ENCODE measurements at regions of chr16 and their contacts with region 1.

Region 1: GRCh38 chr16:12228602-12229499 is 252.3 kb downstream of the SNX29 start:
- DNase-seq: peak; percentile 50 to 95 (median 73)

Region 2: GRCh38 chr16:11990702-11991390 is 238.0 kb before region 1 on chr16:
- intact Hi-C with region 1: no loop called
- DNase-seq: no peak

Region 3: GRCh38 chr16:12271006-12271405 is 42.2 kb after region 1 on chr16:
- intact Hi-C with region 1: loop called (anchors 5 kb)
- DNase-seq: peak in 7 of 10 donors; percentile 36 to 92 (median 49)

Measured in posterior cingulate gyrus (tissue), 11 donors.